Naive thymus-derived CD4-positive, alpha-beta T cell (primary cell): ENCODE measurements at regions of chr22 and their contacts with region 1.

Region 1: DNA sequence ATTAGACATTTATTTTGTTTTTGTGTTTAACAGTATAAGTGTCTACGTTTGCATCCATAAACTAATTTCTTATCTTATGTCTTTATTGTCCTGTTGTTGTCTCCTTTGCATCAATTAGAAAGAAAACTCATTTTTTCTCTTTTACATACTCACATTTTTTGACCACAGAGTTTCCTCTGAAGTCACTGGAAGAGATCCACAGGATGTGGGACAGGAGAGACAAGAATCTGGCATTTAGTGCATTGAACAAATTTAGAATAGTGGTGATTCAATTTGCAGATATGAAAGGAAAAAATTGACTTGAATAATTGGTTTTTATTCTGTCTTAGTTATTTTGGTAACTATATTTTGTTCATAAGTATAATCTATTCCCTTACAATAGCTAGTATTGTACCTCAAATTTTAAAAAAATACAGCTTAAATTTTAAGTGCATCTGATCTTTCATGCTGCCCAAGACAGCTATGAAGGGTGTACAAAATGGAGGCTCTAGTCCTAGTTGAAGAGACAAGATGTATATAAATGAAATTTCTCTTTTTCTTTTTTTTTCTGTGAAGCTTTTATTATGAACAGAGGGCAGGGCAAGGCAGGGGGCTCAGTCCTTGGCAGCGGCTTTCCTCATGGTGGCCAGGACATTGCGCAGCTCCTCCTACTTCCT is 24.4 kb downstream of the HORMAD2 start:
- DNase-seq: peak in 6 of 9 donors; percentile 28 to 62 (median 45)
- ATAC-seq: no peak
- H3K4me3 ChIP-seq: no peak overlapping the region
- H3K4me3 Mint-ChIP-seq: peak overlapping the region in 8 of 10 donors; percentile 22 to 63 (median 42)
- H3K27ac ChIP-seq: no peak overlapping the region
- H3K27ac Mint-ChIP-seq: peak overlapping the region in 3 of 9 donors; percentile 25 to 66 (median 33)
- H3K4me1 ChIP-seq: peaks cover 0 to 16% of the 10 kb centered on the region in 2 donors
- H3K4me1 Mint-ChIP-seq: peaks cover 22 to 62% (median 46%) of the 10 kb centered on the region in 7 donors
- H3K27me3 ChIP-seq: no peaks in the 10 kb centered on the region
- H3K27me3 Mint-ChIP-seq: no peaks in the 10 kb centered on the region

Region 2: GRCh38 chr22:29947410-29948384 is 156.9 kb before region 1 on chr22:
- CTCF ChIA-PET with region 1: no interaction called
- POLR2A ChIA-PET with region 1: no interaction called
- intact Hi-C with region 1: no loop called
- DNase-seq: no peak
- ATAC-seq: no peak
- H3K4me3 ChIP-seq: no peak overlapping the region
- H3K4me3 Mint-ChIP-seq: peak overlapping the region in 3 of 10 donors; percentile 2 to 29 (median 25)
- H3K27ac ChIP-seq: no peak overlapping the region
- H3K27ac Mint-ChIP-seq: peak overlapping the region in 3 of 9 donors; percentile 25 to 64 (median 43)
- H3K4me1 ChIP-seq: peaks cover 0 to 18% of the 10 kb centered on the region in 2 donors
- H3K4me1 Mint-ChIP-seq: peaks cover 16 to 89% (median 82%) of the 10 kb centered on the region in 7 donors
- H3K27me3 ChIP-seq: no peaks in the 10 kb centered on the region
- H3K27me3 Mint-ChIP-seq: no peaks in the 10 kb centered on the region

Region 3: GRCh38 chr22:30027169-30027568 is 77.5 kb before region 1 on chr22:
- CTCF ChIA-PET with region 1: no interaction called
- POLR2A ChIA-PET with region 1: no interaction called
- intact Hi-C with region 1: no loop called
- DNase-seq: no peak
- ATAC-seq: no peak
- H3K4me3 ChIP-seq: no peak overlapping the region
- H3K4me3 Mint-ChIP-seq: no peak overlapping the region
- H3K27ac ChIP-seq: no peak overlapping the region
- H3K27ac Mint-ChIP-seq: peak overlapping the region in 3 of 9 donors; percentile 36 to 57 (median 49)
- H3K4me1 ChIP-seq: no peaks in the 10 kb centered on the region
- H3K4me1 Mint-ChIP-seq: peaks cover 0 to 21% (median 0%) of the 10 kb centered on the region in 7 donors
- H3K27me3 ChIP-seq: no peaks in the 10 kb centered on the region
- H3K27me3 Mint-ChIP-seq: no peaks in the 10 kb centered on the region

Region 4: GRCh38 chr22:30183861-30184278 is 79.2 kb after region 1 on chr22:
- CTCF ChIA-PET with region 1: no interaction called
- POLR2A ChIA-PET with region 1: no interaction called
- intact Hi-C with region 1: loop called in 1 of 2 experiments (anchors 2 kb)
- DNase-seq: no peak
- ATAC-seq: peak; percentile 67
- H3K4me3 ChIP-seq: no peak overlapping the region
- H3K4me3 Mint-ChIP-seq: peak overlapping the region in 1 of 10 donors; percentile 70
- H3K27ac ChIP-seq: no peak overlapping the region
- H3K27ac Mint-ChIP-seq: peak overlapping the region in 2 of 9 donors; percentile 16 to 94
- H3K4me1 ChIP-seq: peaks cover 0 to 6% of the 10 kb centered on the region in 2 donors
- H3K4me1 Mint-ChIP-seq: peaks cover 10 to 90% (median 16%) of the 10 kb centered on the region in 7 donors
- H3K27me3 ChIP-seq: no peaks in the 10 kb centered on the region
- H3K27me3 Mint-ChIP-seq: no peaks in the 10 kb centered on the region

Region 5: GRCh38 chr22:30245985-30246901 is 141.6 kb after region 1 on chr22 and contains the start of gene LIF:
- CTCF ChIA-PET with region 1: interaction called, 3 read pairs
- POLR2A ChIA-PET with region 1: no interaction called
- intact Hi-C with region 1: loop called (anchors 1 to 2 kb)
- DNase-seq: peak; percentile 30 to 77 (median 50)
- ATAC-seq: peak; percentile 85
- H3K4me3 ChIP-seq: peak within 1 kb of the TSS; percentile 58
- H3K4me3 Mint-ChIP-seq: peak within 1 kb of the TSS; percentile 77 to 97 (median 86)
- H3K27ac ChIP-seq: peak within 1 kb of the TSS; percentile 22
- H3K27ac Mint-ChIP-seq: peak within 1 kb of the TSS in 4 of 9 donors; percentile 30 to 99 (median 52)
- H3K4me1 ChIP-seq: peaks cover 0 to 18% of the 10 kb centered on the region in 2 donors
- H3K4me1 Mint-ChIP-seq: peaks cover 6 to 67% (median 26%) of the 10 kb centered on the region in 7 donors
- H3K27me3 ChIP-seq: no peaks in the 10 kb centered on the region
- H3K27me3 Mint-ChIP-seq: peaks cover 0 to 37% (median 6%) of the 10 kb centered on the region in 5 donors
- total RNA-seq, gene LIF: 0.64 to 260 (median 0.98) TPM in 3 of 5 experiments, not detected in the others

Region 6: DNA sequence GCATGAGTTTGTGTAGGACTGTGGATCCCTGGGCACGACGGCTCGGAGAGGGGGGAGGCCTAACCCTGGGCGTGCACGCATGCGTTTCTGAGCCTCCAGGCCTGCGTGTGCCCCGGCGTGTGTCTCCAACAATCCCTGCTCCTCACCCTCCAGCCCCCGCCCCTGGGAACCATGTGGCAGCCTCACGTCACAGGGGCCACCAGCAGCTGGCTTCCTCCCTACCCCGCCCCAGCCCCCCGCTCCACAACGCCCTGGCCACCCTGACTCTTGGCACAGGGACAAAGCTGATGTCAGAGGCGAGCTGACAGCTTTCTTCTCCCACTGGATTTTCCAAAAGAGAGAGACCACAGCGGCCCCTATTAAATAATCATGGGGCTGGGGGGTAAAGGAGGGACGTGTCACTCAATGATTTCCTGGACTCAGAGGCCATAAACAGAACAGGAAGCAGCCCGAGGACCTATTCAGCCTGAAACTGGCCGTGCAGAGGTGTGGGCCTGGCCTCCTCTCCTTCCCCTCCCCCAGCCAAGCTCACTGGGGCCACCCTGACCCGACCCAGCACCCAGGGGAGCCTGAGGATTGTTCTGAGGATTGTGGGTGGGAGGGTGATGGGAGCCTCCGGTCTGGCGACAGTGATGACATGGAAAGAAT is 148.7 kb after region 1 on chr22:
- CTCF ChIA-PET with region 1: interaction called, 4 read pairs
- POLR2A ChIA-PET with region 1: no interaction called
- intact Hi-C with region 1: loop called in 1 of 2 experiments (anchors 1 kb)
- DNase-seq: no peak
- ATAC-seq: no peak
- H3K4me3 ChIP-seq: no peak overlapping the region
- H3K4me3 Mint-ChIP-seq: peak overlapping the region in 1 of 10 donors; percentile 71
- H3K27ac ChIP-seq: no peak overlapping the region
- H3K27ac Mint-ChIP-seq: peak overlapping the region in 1 of 9 donors; percentile 64
- H3K4me1 ChIP-seq: no peaks in the 10 kb centered on the region
- H3K4me1 Mint-ChIP-seq: peaks cover 5 to 51% (median 14%) of the 10 kb centered on the region in 7 donors
- H3K27me3 ChIP-seq: no peaks in the 10 kb centered on the region
- H3K27me3 Mint-ChIP-seq: peaks cover 0 to 5% (median 3%) of the 10 kb centered on the region in 5 donors

Region 7: DNA sequence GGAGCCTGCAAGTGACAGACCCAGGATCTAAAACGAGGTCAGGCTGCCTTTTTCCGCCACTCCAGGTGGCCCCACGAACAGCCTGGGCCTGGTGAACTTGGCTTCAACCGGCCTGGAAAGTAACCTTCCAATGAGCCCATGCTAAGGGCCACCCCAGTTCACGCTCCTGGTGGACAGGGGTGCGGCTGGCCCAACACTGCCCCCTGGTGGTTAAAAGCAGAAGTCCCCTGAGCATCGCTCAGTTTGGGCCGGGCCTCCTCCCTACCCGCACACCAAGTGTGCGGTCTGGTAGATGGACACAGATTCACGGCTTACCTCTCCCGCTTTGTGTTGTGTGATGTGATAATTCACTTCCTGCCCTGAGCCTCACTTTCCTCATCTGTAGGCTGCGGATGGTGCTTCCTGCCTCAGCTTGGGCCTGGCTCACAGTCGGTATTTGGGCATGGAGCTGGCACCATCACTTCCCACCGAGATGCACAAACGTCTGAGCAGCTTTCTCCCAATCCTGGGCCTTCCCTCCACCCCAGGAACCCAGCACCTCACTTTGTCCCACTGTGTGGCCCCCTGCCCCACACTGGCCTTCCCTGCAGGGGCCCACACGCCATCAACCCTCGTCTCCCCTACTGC is 380.8 kb after region 1 on chr22:
- CTCF ChIA-PET with region 1: no interaction called
- POLR2A ChIA-PET with region 1: no interaction called
- intact Hi-C with region 1: loop called in 1 of 2 experiments (anchors 1 kb)
- DNase-seq: peak; percentile 61 to 84 (median 70)
- ATAC-seq: peak; percentile 98
- H3K4me3 ChIP-seq: no peak overlapping the region
- H3K4me3 Mint-ChIP-seq: no peak overlapping the region
- H3K27ac ChIP-seq: no peak overlapping the region
- H3K27ac Mint-ChIP-seq: peak overlapping the region in 3 of 9 donors; percentile 2 to 45 (median 9)
- H3K4me1 ChIP-seq: no peaks in the 10 kb centered on the region
- H3K4me1 Mint-ChIP-seq: peaks cover 0 to 2% (median 0%) of the 10 kb centered on the region in 7 donors
- H3K27me3 ChIP-seq: no peaks in the 10 kb centered on the region
- H3K27me3 Mint-ChIP-seq: peaks cover 0 to 4% (median 0%) of the 10 kb centered on the region in 5 donors

Region 8: GRCh38 chr22:31583861-31584485 is 1479.3 kb after region 1 on chr22:
- CTCF ChIA-PET with region 1: no interaction called
- POLR2A ChIA-PET with region 1: no interaction called
- intact Hi-C with region 1: no loop called
- DNase-seq: no peak
- ATAC-seq: no peak
- H3K4me3 ChIP-seq: no peak overlapping the region
- H3K4me3 Mint-ChIP-seq: peak overlapping the region in 6 of 10 donors; percentile 4 to 66 (median 46)
- H3K27ac ChIP-seq: peak overlapping the region; percentile 49
- H3K27ac Mint-ChIP-seq: peak overlapping the region; percentile 33 to 88 (median 64)
- H3K4me1 ChIP-seq: peaks cover 11 to 35% of the 10 kb centered on the region in 2 donors
- H3K4me1 Mint-ChIP-seq: peaks cover 26 to 49% (median 41%) of the 10 kb centered on the region in 7 donors
- H3K27me3 ChIP-seq: no peaks in the 10 kb centered on the region
- H3K27me3 Mint-ChIP-seq: no peaks in the 10 kb centered on the region